Activated CD8-positive, alpha-beta T cell treated with anti-CD3 and anti-CD28 coated beads for 36 hours (primary cell): ENCODE measurements at regions of chr15 and their contacts with region 1.

Region 1: DNA sequence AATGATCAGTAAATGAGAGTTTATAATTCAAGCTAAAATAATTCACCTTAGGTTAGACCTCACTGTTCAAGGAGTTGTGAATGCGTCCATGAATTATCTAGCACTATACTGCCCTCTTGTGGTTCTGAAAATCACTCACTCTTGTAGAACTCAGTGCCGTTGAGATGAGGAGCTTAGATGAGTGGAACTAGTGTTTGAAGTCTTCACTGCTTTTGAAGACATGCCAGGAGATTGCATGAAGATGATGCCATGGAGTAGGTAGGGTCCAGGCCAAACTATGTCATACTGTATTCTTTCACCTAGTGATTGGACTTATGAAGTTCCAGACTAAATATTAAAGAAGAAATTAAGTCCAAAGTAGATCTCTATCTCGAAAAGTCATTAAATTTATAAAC is 28.8 kb downstream of the LYSMD4 start:
- DNase-seq: peak; percentile 30
- ATAC-seq: peak; percentile 72
- H3K4me3 Mint-ChIP-seq: no peak overlapping the region
- H3K27ac Mint-ChIP-seq: no peak overlapping the region
- H3K4me1 Mint-ChIP-seq: peaks cover 47% of the 10 kb centered on the region
- H3K27me3 Mint-ChIP-seq: no peaks in the 10 kb centered on the region
- CTCF ChIP-seq: peak; percentile 77

Region 2: GRCh38 chr15:99275525-99276128 is 428.8 kb before region 1 on chr15:
- CTCF ChIA-PET with region 1: interaction called, 102 read pairs
- POLR2A ChIA-PET with region 1: interaction called, 3 read pairs
- intact Hi-C with region 1: loop called (anchors 2 kb)
- DNase-seq: no peak
- ATAC-seq: no peak
- H3K4me3 Mint-ChIP-seq: no peak overlapping the region
- H3K27ac Mint-ChIP-seq: no peak overlapping the region
- H3K4me1 Mint-ChIP-seq: peaks cover 21% of the 10 kb centered on the region
- H3K27me3 Mint-ChIP-seq: no peaks in the 10 kb centered on the region
- CTCF ChIP-seq: no peak

Region 3: GRCh38 chr15:99343881-99344551 is 360.4 kb before region 1 on chr15:
- CTCF ChIA-PET with region 1: interaction called, 30 read pairs
- POLR2A ChIA-PET with region 1: no interaction called
- intact Hi-C with region 1: no loop called
- DNase-seq: peak; percentile 54
- ATAC-seq: peak; percentile 79
- H3K4me3 Mint-ChIP-seq: no peak overlapping the region
- H3K27ac Mint-ChIP-seq: no peak overlapping the region
- H3K4me1 Mint-ChIP-seq: peaks cover 10% of the 10 kb centered on the region
- H3K27me3 Mint-ChIP-seq: no peaks in the 10 kb centered on the region
- CTCF ChIP-seq: peak; percentile 50

Region 4: DNA sequence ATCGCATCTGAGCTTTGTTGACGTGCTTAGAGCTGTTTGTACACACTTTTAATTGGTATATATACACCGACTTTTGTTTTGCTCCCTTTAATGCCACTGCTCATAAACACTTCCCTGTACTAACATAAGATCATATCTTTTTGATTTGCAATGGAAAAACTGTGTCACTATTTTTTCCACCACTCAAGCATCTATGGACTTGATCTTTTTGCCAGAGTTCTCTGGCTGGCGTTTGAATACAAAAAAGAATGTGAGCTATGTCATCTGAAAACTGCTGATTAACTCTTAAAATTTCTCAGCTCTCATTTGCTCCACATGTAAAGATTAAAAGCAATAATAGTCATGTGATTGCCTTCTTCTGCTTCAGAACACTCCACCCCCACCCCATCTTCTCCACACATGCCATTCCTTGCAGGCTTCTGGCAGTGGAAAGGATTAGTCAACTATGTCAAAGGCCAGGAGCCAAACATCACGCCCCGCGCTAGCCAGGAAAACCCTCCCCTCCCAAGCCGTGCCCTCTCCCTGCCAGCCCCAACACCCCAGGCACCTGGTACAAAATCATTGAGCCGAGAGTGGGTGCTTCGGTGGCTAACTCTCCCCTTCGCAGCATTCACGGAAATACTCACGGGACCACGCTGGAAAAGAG is 262.1 kb before region 1 on chr15:
- CTCF ChIA-PET with region 1: interaction called, 6 read pairs
- POLR2A ChIA-PET with region 1: no interaction called
- intact Hi-C with region 1: loop called (anchors 10 kb)
- DNase-seq: no peak
- ATAC-seq: peak; percentile 40
- H3K4me3 Mint-ChIP-seq: no peak overlapping the region
- H3K27ac Mint-ChIP-seq: no peak overlapping the region
- H3K4me1 Mint-ChIP-seq: peaks cover 56% of the 10 kb centered on the region
- H3K27me3 Mint-ChIP-seq: no peaks in the 10 kb centered on the region
- CTCF ChIP-seq: no peak

Region 5: GRCh38 chr15:99598296-99598695 is 106.1 kb before region 1 on chr15:
- CTCF ChIA-PET with region 1: no interaction called
- POLR2A ChIA-PET with region 1: no interaction called
- intact Hi-C with region 1: no loop called
- DNase-seq: no peak
- ATAC-seq: no peak
- H3K4me3 Mint-ChIP-seq: no peak overlapping the region
- H3K27ac Mint-ChIP-seq: no peak overlapping the region
- H3K4me1 Mint-ChIP-seq: peaks cover 14% of the 10 kb centered on the region
- H3K27me3 Mint-ChIP-seq: no peaks in the 10 kb centered on the region
- CTCF ChIP-seq: no peak

Region 6: GRCh38 chr15:99692825-99693224 is 11.6 kb before region 1 on chr15:
- CTCF ChIA-PET with region 1: interaction called, 52 read pairs
- POLR2A ChIA-PET with region 1: no interaction called
- intact Hi-C with region 1: no loop called
- DNase-seq: no peak
- ATAC-seq: no peak
- H3K4me3 Mint-ChIP-seq: no peak overlapping the region
- H3K27ac Mint-ChIP-seq: no peak overlapping the region
- H3K4me1 Mint-ChIP-seq: no peaks in the 10 kb centered on the region
- H3K27me3 Mint-ChIP-seq: no peaks in the 10 kb centered on the region
- CTCF ChIP-seq: no peak

Region 7: DNA sequence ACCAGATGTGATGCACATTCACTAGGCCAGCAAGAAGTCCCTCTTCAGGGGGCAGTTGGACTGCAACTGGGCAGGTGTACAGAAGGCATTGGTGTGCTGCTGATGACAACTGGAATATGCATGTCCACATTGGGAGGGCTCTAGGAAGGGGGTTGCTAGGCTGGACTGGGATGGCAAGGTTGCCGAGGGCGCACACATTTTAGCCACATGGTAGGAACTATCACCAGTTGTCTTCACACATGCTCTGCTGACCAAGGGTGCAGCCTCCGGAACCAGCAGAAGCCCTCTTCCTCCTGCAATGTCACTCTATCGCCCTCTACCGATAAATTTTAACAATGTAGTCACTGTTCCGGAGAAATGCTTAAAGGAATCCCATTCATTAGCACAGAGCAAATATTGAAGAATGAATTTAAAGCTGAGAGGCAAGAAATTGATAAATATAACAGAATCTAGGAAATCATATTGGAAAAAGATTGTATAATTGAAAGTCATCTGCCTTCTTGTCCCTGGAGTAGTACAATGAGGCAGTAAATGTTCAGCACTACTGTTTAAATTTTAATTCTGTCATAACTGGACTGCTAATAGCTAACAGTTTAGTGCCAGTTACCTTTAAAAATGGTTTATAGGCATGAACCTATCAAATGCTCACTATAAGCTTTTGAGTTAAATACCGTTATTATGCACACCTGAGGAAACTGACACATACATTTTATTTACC is 51.4 kb after region 1 on chr15:
- CTCF ChIA-PET with region 1: interaction called, 19 read pairs
- POLR2A ChIA-PET with region 1: no interaction called
- intact Hi-C with region 1: no loop called
- DNase-seq: peak; percentile 41
- ATAC-seq: peak; percentile 88
- H3K4me3 Mint-ChIP-seq: no peak overlapping the region
- H3K27ac Mint-ChIP-seq: no peak overlapping the region
- H3K4me1 Mint-ChIP-seq: no peaks in the 10 kb centered on the region
- H3K27me3 Mint-ChIP-seq: peaks cover 6% of the 10 kb centered on the region
- CTCF ChIP-seq: peak; percentile 92